Activated CD4-positive, alpha-beta memory T cell treated with anti-CD3 and anti-CD28 coated beads for 36 hours (primary cell): ENCODE measurements at regions of chr22 and their contacts with region 1.

Region 1: DNA sequence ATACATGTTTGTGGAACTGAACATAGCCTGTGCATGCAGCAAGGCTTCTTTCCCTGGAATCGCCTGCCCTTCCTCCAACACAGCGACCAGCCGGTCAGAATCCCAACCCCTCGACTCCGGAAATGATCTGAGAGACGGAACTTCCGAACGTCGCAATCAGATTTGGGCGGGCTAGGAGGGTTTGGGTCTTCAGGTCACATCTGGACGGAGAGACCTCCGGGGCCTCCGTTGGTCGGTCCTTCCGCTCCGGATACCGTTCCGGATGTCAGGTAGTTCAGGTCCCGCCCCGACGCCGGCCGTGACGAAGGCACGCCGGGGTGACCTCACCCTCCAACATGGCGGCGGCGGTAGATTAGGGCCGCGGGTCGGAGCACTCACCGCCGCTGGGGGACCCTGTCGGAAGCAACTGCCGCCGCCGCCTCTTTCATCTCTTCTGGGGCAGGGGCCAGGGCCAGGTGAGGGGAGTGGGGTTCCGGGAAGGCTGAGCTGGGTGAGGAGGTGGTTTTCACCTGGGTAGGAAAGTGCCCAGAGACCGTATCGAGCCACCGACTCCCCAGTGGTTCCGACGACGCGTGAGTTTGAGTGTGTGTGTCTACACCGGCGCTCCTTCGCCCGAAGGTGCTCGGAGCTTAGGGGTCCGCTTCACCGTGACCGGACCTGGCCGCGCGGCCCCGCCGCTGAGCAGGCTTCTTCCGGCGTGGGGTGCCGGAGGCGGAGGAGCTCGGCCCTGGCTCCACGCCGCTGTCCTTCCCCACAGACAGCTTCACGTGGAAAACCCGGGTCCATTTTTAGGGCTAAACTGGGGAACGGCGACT is at the start of gene BCL2L13:
- DNase-seq: peak; percentile 93
- H3K4me3 Mint-ChIP-seq: peak within 1 kb of the TSS; percentile 87
- H3K27ac Mint-ChIP-seq: peak within 1 kb of the TSS; percentile 89
- H3K4me1 Mint-ChIP-seq: peaks cover 21% of the 10 kb centered on the region
- H3K27me3 Mint-ChIP-seq: no peaks in the 10 kb centered on the region
- total RNA-seq, gene BCL2L13: 34.5 to 36.2 TPM

Region 2: DNA sequence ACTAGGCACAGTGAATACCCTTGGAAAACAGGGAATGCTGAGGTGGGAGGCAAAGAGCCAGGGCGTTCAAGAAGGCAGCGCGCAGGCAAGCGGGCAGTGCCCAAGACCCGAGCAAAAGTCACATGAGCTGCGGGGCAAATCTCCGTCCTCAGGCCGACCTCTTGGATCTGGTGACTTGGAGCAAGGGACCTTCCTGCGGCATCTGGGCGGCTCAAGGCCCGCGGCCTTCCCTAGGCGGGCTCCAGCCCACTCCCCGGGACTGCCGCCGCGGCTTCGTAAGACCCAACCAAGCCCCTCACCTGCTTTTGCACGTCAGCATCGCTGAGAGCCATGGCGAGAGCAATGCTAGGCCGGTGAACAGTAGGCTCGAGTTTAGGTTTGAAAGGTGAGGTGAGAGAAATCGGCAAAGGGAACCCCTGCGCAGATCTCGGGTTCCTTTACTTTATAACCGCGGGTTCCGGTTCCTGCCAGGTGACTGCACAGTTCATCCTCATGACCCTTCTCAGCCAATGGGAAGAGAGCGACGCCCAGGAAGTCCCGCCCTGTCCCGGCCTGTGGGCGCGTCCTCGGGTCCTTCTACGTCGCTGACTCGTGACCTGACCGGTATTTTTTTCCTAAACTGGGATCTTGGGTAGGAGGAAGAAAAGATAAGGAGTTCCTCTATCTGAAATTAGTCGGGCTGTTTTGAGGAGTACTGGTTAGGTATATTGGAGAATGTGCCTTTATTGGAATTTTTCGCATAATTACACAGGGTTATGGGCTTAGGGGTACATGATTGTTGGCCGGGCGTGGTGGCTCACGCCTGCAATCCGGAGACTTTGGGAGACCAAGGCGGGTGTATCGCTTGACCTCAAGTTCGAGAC is 10.1 kb before region 1 on chr22 and contains the start of gene ATP6V1E1:
- CTCF ChIA-PET with region 1: no interaction called
- POLR2A ChIA-PET with region 1: no interaction called
- intact Hi-C with region 1: loop called (anchors 1 kb)
- DNase-seq: peak; percentile 98
- H3K4me3 Mint-ChIP-seq: peak within 1 kb of the TSS; percentile 94
- H3K27ac Mint-ChIP-seq: peak within 1 kb of the TSS; percentile 79
- H3K4me1 Mint-ChIP-seq: peaks cover 29% of the 10 kb centered on the region
- H3K27me3 Mint-ChIP-seq: no peaks in the 10 kb centered on the region
- total RNA-seq, gene ATP6V1E1: 95.5 to 97.9 TPM

Region 3: DNA sequence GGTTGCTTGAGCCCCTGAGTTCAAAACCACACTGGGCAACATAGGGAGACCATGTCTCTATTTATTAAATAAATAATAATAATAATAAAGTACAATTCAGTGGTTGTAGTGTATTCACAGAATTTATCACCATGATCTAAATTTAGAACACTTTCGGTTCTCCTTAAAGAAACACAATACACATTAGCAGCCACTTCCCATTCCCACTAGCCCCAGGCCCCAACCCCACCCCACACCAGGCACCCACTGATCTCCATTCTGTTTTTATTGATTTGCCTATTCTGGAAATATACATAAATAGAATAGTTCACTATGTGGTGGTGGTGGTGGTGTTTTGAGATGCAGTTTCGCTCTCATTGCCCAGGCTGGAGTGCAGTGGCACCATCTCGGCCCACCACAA is 45.6 kb after region 1 on chr22:
- CTCF ChIA-PET with region 1: no interaction called
- POLR2A ChIA-PET with region 1: no interaction called
- intact Hi-C with region 1: no loop called
- DNase-seq: no peak
- H3K4me3 Mint-ChIP-seq: no peak overlapping the region
- H3K27ac Mint-ChIP-seq: no peak overlapping the region
- H3K4me1 Mint-ChIP-seq: no peaks in the 10 kb centered on the region
- H3K27me3 Mint-ChIP-seq: no peaks in the 10 kb centered on the region

Region 4: GRCh38 chr22:17706018-17706900 is 67.6 kb after region 1 on chr22:
- CTCF ChIA-PET with region 1: no interaction called
- POLR2A ChIA-PET with region 1: interaction called, 5 read pairs
- intact Hi-C with region 1: loop called (anchors 2 kb)
- DNase-seq: peak; percentile 68
- H3K4me3 Mint-ChIP-seq: peak overlapping the region; percentile 51
- H3K27ac Mint-ChIP-seq: peak overlapping the region; percentile 87
- H3K4me1 Mint-ChIP-seq: peaks cover 15% of the 10 kb centered on the region
- H3K27me3 Mint-ChIP-seq: no peaks in the 10 kb centered on the region